ENCODE measurements at regions of chr11 and their contacts with region 1.

Region 1: DNA sequence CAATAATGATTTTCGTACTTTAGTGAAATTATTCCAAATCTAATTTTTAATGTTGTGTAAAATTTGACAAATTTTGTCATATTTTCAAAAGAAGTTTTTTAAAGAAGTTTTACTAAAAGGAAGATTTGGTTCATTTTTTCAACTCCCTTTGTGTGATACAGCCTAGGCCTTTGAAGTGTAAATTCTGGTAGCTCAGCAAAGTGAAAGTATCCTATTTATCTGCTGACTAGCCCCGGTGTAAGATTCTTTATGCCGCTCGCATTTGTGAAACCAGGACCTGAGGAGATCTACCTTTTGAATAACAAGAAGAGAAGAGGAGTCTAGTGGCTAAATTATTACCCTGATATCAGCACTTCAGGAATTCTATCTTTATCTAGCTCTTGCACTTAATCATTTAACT is 177.4 kb downstream of the JRKL start:
- DNase-seq: no peak
- H3K4me3 Mint-ChIP-seq: no peak overlapping the region
- H3K27ac Mint-ChIP-seq: no peak overlapping the region
- H3K4me1 Mint-ChIP-seq: no peaks in the 10 kb centered on the region
- H3K27me3 Mint-ChIP-seq: no peaks in the 10 kb centered on the region

Region 2: DNA sequence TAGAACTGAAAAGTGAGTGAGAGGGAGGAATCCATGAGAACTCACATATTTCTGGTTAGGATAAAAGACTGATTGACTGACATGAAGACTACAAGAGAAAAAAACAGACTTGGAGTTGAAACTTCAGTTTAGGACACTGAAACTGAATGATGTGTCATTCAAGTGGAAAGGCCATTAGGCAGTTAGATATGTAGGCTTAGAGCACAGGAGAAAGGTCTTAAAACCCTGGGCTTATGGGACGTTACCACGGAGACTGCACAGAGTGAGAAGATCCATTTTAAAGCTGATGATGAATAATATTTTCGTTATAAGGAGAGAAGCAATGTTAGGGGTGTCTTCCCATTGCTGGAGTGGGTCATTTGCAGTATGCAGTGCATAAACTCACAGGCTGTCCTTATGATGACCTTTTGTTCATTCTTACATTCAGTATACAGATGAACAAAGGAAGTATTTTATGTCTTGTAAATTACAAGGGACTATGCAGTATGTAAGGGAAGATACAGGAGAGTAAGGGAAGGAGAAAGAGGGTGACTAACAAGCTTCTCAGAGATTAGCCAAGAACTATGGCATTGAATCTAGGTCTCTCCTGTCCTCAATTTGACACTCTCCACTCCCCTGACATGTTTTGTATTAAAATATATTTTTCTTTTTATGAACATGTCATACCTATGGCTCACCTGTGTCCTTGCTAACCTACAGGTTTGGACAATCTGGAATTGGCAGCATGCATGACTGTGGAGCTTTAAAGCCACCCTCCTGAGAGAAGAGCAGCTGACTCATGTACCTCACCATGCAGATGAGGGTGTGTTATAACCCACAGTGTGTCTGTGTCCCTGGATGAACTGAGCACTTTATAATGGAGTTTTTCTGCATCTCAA is 287.9 kb before region 1 on chr11:
- intact Hi-C with region 1: no loop called
- DNase-seq: no peak
- H3K4me3 Mint-ChIP-seq: no peak overlapping the region
- H3K27ac Mint-ChIP-seq: no peak overlapping the region
- H3K4me1 Mint-ChIP-seq: peaks cover 40% of the 10 kb centered on the region
- H3K27me3 Mint-ChIP-seq: no peaks in the 10 kb centered on the region

Region 3: GRCh38 chr11:96554236-96554820 is 12.8 kb before region 1 on chr11:
- intact Hi-C with region 1: loop called (anchors 2 kb)
- DNase-seq: no peak
- H3K4me3 Mint-ChIP-seq: no peak overlapping the region
- H3K27ac Mint-ChIP-seq: no peak overlapping the region
- H3K4me1 Mint-ChIP-seq: no peaks in the 10 kb centered on the region
- H3K27me3 Mint-ChIP-seq: no peaks in the 10 kb centered on the region